ENCODE measurements at regions of chr16 and their contacts with region 1.

Region 1: DNA sequence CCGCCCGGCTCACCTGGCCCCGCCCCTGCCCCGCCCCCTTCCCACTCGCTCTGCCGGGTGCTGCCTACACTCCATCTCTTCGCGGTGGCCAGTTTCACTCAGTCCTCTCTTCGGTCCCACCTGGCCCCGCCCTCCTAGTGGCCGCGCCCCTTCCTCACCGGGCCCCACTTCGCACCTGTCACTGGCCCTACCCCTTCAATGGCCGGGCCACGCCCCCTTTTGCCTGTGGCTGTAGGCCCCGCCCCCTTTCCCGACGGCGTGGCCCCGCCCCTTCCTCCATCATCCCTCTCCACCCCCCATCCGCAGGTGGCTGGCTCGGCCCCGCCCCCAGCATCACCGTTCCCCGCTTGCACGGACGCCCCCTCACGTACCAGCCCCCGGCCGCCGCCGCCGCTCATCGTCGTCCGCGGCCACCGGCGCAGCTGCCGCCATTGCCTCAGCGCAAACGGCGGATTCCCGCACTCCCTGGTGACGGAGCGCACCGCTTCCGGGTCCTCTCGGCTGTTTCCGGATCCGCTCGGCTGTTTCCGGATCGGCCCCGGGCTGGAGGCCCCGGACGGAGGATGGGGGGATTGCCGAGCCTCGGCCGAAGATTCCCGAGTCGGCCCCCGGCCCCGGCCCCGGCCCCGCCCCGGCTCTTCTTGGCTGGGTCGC is at the start of gene RABEP2:
- DNase-seq: peak; percentile 99
- ATAC-seq: peak; percentile 64
- H3K4me3 Mint-ChIP-seq: peak within 1 kb of the TSS; percentile 90
- H3K27ac Mint-ChIP-seq: peak within 1 kb of the TSS; percentile 96
- H3K4me1 Mint-ChIP-seq: peaks cover 54% of the 10 kb centered on the region
- H3K27me3 Mint-ChIP-seq: no peaks in the 10 kb centered on the region
- CTCF ChIP-seq: no peak
- total RNA-seq, gene RABEP2: 93.5 and 110 TPM in 2 replicates

Region 2: GRCh38 chr16:28491970-28492474 is 432.8 kb before region 1 on chr16 and contains the start of gene CLN3:
- CTCF ChIA-PET with region 1: no interaction called
- POLR2A ChIA-PET with region 1: interaction called, 13 read pairs
- intact Hi-C with region 1: loop called (anchors 5 kb)
- DNase-seq: peak; percentile 80
- ATAC-seq: peak; percentile 72
- H3K4me3 Mint-ChIP-seq: peak within 1 kb of the TSS; percentile 96
- H3K27ac Mint-ChIP-seq: peak within 1 kb of the TSS; percentile 100
- H3K4me1 Mint-ChIP-seq: peaks cover 48% of the 10 kb centered on the region
- H3K27me3 Mint-ChIP-seq: no peaks in the 10 kb centered on the region
- CTCF ChIP-seq: no peak
- total RNA-seq, gene CLN3: 27.9 and 32.0 TPM in 2 replicates

Region 3: DNA sequence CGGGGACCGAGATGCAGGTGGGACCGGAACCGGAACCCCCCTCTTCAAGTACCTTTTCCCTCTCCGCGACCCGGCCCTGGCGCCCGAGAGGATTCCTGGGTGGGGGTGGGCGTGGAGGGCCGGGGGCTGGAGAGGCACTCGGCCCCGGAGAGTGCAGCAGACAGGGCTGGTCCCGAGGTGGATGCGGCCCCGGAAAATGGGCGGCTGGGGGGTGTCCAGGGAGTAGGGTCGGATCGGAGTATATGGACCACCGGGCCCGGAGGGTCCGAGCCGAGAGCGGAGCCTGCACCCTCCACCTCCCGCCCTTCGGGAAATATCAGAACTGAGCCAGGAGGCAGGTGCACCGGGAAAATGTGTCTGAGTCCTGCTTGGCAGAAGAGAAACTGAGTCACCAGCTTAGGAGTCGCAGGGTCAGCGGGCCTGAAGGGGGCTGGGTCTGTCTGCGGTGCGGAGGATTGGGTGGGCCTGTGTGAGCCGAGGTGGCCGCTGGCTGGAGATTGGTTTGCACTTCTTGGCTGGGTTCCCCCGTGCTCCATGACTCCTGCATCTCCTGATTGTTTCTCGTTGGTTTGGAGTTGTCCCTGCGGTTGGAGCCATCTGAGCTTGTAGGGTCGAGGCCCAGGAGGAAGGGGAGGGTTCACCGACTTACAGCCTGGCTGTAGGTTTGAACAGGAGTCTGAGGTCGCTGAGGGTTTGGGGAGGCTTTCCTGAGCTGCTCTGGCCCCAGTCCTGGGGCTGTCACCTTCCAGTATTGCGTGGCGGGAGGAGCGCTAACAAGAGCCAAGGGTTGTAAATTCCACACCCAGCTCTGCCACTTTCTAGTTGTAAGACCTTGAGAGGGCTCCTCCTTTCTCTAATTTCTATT is 60.7 kb before region 1 on chr16:
- CTCF ChIA-PET with region 1: interaction called, 3 read pairs
- POLR2A ChIA-PET with region 1: interaction called, 34 read pairs
- intact Hi-C with region 1: loop called (anchors 1 kb)
- DNase-seq: no peak
- ATAC-seq: no peak
- H3K4me3 Mint-ChIP-seq: peak overlapping the region; percentile 98
- H3K27ac Mint-ChIP-seq: peak overlapping the region; percentile 98
- H3K4me1 Mint-ChIP-seq: peaks cover 24% of the 10 kb centered on the region
- H3K27me3 Mint-ChIP-seq: no peaks in the 10 kb centered on the region
- CTCF ChIP-seq: no peak

Region 4: GRCh38 chr16:28902909-28903308 is 21.9 kb before region 1 on chr16:
- CTCF ChIA-PET with region 1: no interaction called
- POLR2A ChIA-PET with region 1: interaction called, 3 read pairs
- intact Hi-C with region 1: loop called (anchors 2 kb)
- DNase-seq: no peak
- ATAC-seq: peak; percentile 36
- H3K4me3 Mint-ChIP-seq: no peak overlapping the region
- H3K27ac Mint-ChIP-seq: peak overlapping the region; percentile 73
- H3K4me1 Mint-ChIP-seq: peaks cover 18% of the 10 kb centered on the region
- H3K27me3 Mint-ChIP-seq: no peaks in the 10 kb centered on the region
- CTCF ChIP-seq: no peak

Region 5: DNA sequence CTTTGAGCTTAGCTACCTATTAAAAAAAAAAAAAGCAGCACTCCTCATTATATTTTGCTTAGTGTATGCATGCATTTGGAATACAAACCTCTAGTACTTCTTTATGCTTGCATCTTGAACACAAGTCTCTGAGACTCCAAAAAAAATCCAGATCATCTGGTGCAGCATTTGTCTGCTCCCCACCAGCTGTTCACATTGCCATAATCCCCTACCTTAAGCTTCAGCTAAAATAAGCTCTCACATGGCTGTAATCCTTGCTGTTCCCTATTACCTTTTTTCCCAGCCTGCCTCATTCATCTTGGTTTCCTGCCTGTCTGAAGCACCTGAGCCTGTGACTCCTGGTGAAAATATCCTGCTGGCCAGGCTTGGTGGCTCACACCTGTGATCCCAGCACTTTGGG is 18.4 kb after region 1 on chr16:
- CTCF ChIA-PET with region 1: interaction called, 51 read pairs
- POLR2A ChIA-PET with region 1: interaction called, 192 read pairs
- intact Hi-C with region 1: loop called (anchors 1 kb)
- DNase-seq: no peak
- ATAC-seq: no peak
- H3K4me3 Mint-ChIP-seq: no peak overlapping the region
- H3K27ac Mint-ChIP-seq: peak overlapping the region; percentile 8
- H3K4me1 Mint-ChIP-seq: peaks cover 11% of the 10 kb centered on the region
- H3K27me3 Mint-ChIP-seq: no peaks in the 10 kb centered on the region
- CTCF ChIP-seq: no peak

Region 6: GRCh38 chr16:28958836-28959235 is 34.0 kb after region 1 on chr16:
- CTCF ChIA-PET with region 1: no interaction called
- POLR2A ChIA-PET with region 1: no interaction called
- intact Hi-C with region 1: no loop called
- DNase-seq: no peak
- ATAC-seq: no peak
- H3K4me3 Mint-ChIP-seq: no peak overlapping the region
- H3K27ac Mint-ChIP-seq: no peak overlapping the region
- H3K4me1 Mint-ChIP-seq: peaks cover 2% of the 10 kb centered on the region
- H3K27me3 Mint-ChIP-seq: no peaks in the 10 kb centered on the region
- CTCF ChIP-seq: no peak

Region 7: DNA sequence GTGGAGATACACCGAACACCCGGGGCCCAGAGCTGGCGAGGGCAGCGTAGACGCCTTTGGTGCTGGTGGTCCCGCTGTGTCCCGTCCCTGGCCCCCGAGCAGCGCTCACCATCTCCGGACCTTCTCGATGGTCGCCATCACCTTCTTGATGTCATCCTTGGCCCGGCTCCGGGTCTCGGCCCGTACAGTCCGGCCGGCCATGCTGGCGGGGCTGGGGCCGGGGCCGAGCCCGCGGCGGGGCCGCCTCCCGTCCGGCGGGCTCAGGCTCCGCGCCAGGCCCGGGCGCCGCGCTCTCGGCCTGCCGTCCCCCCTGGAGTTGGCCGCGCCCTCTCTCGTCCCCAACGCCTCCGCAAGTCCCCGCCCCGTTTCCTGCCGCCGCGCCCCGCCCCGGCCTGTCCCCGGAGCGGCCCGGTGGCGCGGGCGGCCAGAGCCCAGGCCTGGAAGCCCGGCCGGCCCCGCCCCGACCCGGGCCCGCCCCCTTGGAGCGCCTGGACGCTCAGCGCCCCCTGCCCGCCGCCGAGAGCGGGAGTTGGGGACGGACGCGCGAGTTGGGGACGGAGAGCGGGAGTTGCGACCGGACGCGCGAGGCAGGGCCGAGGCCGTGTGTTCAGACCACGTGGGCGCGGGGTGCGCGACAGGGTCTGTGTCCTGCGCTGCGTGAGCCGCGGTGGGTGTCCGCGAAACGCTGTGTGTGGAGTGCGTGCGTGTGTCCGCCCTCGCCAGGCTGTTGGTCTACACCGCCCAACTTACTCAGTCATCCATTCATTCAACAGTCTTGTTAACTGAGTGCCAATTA is 1969.1 kb after region 1 on chr16 and contains the start of gene BCL7C:
- CTCF ChIA-PET with region 1: no interaction called
- POLR2A ChIA-PET with region 1: no interaction called
- intact Hi-C with region 1: loop called (anchors 2 kb)
- DNase-seq: peak; percentile 86
- ATAC-seq: peak; percentile 76
- H3K4me3 Mint-ChIP-seq: peak within 1 kb of the TSS; percentile 84
- H3K27ac Mint-ChIP-seq: peak within 1 kb of the TSS; percentile 88
- H3K4me1 Mint-ChIP-seq: peaks cover 48% of the 10 kb centered on the region
- H3K27me3 Mint-ChIP-seq: no peaks in the 10 kb centered on the region
- CTCF ChIP-seq: no peak
- total RNA-seq, gene BCL7C: 32.2 and 35.7 TPM in 2 replicates

Measured in activated B cell treated with CpG ODN at 0.5 μM for 24 hours (primary cell).